Activated CD8-positive, alpha-beta T cell treated with anti-CD3 and anti-CD28 coated beads for 36 hours (primary cell): ENCODE measurements at regions of chr5 and their contacts with region 1.

Region 1: DNA sequence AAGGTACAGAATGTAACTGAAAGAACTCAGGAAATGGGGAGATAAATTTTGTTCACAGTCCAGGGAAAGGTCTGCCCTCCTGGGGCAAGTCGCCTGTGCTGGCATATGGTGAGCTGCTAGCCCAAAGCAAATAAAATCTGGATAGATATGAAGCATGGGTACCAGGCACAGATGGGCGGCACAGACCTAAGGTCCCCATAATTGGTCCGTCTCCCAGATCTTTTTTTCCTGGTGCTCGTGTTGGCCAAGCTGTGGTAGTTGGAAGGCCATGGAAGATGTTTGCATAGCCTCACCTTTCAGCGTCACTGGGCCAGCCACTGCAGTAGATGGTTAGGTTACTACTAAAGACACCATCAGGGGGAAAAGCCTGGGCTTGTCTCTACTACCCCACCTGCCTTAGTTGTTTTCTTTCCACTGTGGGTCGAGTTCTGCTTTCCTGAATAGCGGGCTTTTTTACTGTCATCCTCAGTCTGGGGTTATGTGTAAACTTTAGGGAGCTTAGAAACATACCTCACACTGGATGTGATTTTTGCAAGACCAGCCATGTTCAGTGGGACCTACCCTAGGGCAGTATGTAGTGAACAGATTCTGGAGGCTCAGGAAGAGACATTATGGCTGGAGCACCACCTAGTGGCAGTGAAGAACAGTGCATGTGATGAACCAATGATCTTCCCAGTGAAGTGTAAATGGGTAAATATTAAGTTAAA is 24.2 kb upstream of the GLRX start:
- DNase-seq: peak; percentile 77
- ATAC-seq: peak; percentile 78
- H3K4me3 Mint-ChIP-seq: no peak overlapping the region
- H3K27ac Mint-ChIP-seq: no peak overlapping the region
- H3K4me1 Mint-ChIP-seq: peaks cover 17% of the 10 kb centered on the region
- H3K27me3 Mint-ChIP-seq: no peaks in the 10 kb centered on the region
- CTCF ChIP-seq: peak; percentile 93

Region 2: GRCh38 chr5:95646554-95647431 is 199.9 kb before region 1 on chr5 and contains the start of gene RFESD:
- CTCF ChIA-PET with region 1: interaction called, 13 read pairs
- POLR2A ChIA-PET with region 1: no interaction called
- intact Hi-C with region 1: loop called (anchors 5 kb)
- DNase-seq: peak; percentile 99
- ATAC-seq: peak; percentile 95
- H3K4me3 Mint-ChIP-seq: peak within 1 kb of the TSS; percentile 81
- H3K27ac Mint-ChIP-seq: peak within 1 kb of the TSS; percentile 90
- H3K4me1 Mint-ChIP-seq: peaks cover 36% of the 10 kb centered on the region
- H3K27me3 Mint-ChIP-seq: no peaks in the 10 kb centered on the region
- CTCF ChIP-seq: no peak
- total RNA-seq, gene RFESD: 9.2 to 9.8 TPM

Region 3: GRCh38 chr5:95704150-95704549 is 142.6 kb before region 1 on chr5:
- CTCF ChIA-PET with region 1: no interaction called
- POLR2A ChIA-PET with region 1: no interaction called
- intact Hi-C with region 1: no loop called
- DNase-seq: no peak
- ATAC-seq: no peak
- H3K4me3 Mint-ChIP-seq: no peak overlapping the region
- H3K27ac Mint-ChIP-seq: no peak overlapping the region
- H3K4me1 Mint-ChIP-seq: no peaks in the 10 kb centered on the region
- H3K27me3 Mint-ChIP-seq: peaks cover 6% of the 10 kb centered on the region
- CTCF ChIP-seq: no peak

Region 4: DNA sequence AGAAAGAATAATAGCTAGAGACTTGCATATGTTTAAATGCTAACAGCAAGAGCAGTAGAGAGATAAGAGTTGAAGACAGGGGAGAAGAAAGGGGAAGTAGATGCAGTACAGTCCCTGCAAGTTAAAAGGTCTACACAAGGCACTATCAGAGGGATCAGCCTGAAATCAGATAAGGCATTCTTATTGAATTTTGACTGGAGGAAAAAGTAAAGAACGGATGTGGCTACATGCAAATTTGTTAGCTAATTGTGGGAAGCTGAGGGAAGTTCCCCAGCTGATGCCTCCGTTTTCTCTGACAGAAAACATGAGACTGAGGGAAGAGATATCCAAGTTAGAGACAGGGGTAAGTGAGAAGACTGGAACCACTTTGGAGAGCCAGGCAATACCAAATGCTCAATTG is 128.5 kb before region 1 on chr5:
- CTCF ChIA-PET with region 1: no interaction called
- POLR2A ChIA-PET with region 1: no interaction called
- intact Hi-C with region 1: loop called (anchors 5 kb)
- DNase-seq: peak; percentile 48
- ATAC-seq: peak; percentile 77
- H3K4me3 Mint-ChIP-seq: no peak overlapping the region
- H3K27ac Mint-ChIP-seq: no peak overlapping the region
- H3K4me1 Mint-ChIP-seq: peaks cover 17% of the 10 kb centered on the region
- H3K27me3 Mint-ChIP-seq: peaks cover 4% of the 10 kb centered on the region
- CTCF ChIP-seq: no peak

Region 5: DNA sequence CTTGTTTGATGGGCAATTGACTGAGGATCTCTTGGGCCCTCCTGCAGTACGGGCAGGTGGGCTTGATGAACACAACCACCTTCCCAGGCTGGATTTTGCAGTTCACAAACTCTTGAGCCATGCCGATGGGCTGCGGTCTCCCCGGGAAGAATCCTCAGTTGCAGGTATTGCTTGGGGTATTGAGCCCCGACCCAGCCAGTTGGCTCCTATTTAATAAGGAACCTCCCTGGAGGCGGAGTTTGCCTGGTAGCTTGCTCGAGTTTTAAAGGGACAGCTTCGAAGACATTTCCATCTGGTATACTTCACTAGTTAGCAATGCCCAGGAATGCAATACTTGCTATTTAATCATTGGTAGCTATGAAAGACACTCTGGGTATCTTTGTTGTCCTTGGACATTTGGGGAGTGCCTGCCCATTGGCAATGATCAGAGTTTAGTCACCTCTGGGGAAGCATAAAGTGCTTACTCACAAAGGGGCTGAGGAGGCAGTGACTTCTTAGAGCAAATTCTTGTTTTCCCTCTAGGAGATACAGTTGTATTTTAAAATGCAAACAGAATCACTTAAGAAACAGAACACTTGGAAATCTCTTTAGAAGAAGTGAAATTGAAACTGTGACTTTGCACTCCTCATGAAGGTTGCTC is 24.0 kb before region 1 on chr5 and contains the start of gene GLRX:
- CTCF ChIA-PET with region 1: interaction called, 60 read pairs
- POLR2A ChIA-PET with region 1: interaction called, 5 read pairs
- intact Hi-C with region 1: no loop called
- DNase-seq: peak; percentile 73
- ATAC-seq: peak; percentile 15
- H3K4me3 Mint-ChIP-seq: peak within 1 kb of the TSS; percentile 87
- H3K27ac Mint-ChIP-seq: peak within 1 kb of the TSS; percentile 93
- H3K4me1 Mint-ChIP-seq: peaks cover 44% of the 10 kb centered on the region
- H3K27me3 Mint-ChIP-seq: no peaks in the 10 kb centered on the region
- CTCF ChIP-seq: no peak
- total RNA-seq, gene GLRX: 28.4 to 32.6 TPM

Region 6: DNA sequence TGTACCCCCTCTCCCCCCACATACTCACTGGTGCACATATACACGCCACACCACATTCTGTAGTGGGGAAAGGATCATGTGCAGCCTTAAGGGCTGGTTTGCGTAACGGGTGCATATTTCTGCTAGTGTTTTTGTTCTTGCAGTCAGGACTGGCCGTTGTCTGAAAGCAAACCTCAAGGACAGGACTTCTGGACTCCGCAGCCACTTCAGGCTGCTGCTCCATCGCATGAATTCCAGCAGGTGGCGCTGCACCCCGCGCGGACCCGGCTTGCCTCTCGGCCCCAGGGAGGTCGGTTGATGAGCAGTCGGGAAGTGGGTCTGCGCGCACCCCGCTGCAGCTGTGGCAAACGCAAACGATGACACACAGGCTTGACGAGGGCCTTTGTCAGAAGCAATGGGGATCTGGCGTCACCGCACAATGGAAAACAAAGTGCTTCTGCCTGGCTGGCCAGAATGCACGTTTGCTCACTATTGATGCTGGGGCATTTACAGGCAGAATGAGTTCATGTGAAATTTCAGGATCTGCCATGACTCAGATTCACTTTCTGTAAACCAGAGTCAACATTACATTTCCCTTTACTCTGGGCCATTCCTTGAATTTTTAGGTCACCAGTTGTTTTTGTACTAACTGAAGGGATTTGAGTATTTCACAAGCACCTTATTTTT is 12.1 kb after region 1 on chr5:
- CTCF ChIA-PET with region 1: interaction called, 15 read pairs
- POLR2A ChIA-PET with region 1: interaction called, 4 read pairs
- intact Hi-C with region 1: no loop called
- DNase-seq: peak; percentile 97
- ATAC-seq: peak; percentile 97
- H3K4me3 Mint-ChIP-seq: peak overlapping the region; percentile 31
- H3K27ac Mint-ChIP-seq: peak overlapping the region; percentile 66
- H3K4me1 Mint-ChIP-seq: peaks cover 45% of the 10 kb centered on the region
- H3K27me3 Mint-ChIP-seq: no peaks in the 10 kb centered on the region
- CTCF ChIP-seq: peak; percentile 92

Region 7: DNA sequence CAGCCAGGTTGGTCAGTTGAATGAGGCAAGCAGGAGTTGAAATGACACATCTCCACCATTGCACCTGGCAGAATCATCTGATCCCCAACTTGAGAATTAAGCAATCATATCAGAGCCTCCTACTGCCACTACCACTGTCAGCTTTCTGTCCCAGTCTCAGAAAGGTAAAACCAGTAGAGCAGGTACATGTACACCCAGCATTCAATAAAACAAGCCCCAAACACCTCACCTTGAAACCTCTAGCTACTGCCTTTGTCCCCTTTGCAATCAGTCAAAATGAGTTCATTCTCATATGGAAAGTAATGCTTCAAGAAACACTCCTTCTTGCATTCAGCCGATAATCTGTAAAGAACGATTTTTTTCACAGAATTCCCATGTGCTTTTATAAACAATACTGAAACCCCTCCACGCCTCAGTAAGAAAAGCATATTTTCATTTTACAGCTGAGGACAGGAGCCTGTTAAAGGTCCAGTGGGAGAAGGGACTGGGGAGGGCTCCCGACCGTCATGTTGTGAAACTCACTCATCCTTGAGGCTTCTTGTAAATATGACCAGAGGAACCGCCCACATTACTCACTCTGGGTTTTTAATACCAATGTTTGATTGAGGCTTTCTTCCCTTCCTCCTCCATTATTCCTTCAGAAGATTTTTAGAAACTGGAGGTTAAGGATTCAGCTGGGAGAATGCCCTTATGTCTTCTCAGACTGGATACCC is 37.1 kb after region 1 on chr5:
- CTCF ChIA-PET with region 1: no interaction called
- POLR2A ChIA-PET with region 1: no interaction called
- intact Hi-C with region 1: no loop called
- DNase-seq: no peak
- ATAC-seq: no peak
- H3K4me3 Mint-ChIP-seq: no peak overlapping the region
- H3K27ac Mint-ChIP-seq: no peak overlapping the region
- H3K4me1 Mint-ChIP-seq: peaks cover 4% of the 10 kb centered on the region
- H3K27me3 Mint-ChIP-seq: no peaks in the 10 kb centered on the region
- CTCF ChIP-seq: no peak